PC-9 (cell line): ENCODE measurements at regions of chr6 and their contacts with region 1.

Region 1: DNA sequence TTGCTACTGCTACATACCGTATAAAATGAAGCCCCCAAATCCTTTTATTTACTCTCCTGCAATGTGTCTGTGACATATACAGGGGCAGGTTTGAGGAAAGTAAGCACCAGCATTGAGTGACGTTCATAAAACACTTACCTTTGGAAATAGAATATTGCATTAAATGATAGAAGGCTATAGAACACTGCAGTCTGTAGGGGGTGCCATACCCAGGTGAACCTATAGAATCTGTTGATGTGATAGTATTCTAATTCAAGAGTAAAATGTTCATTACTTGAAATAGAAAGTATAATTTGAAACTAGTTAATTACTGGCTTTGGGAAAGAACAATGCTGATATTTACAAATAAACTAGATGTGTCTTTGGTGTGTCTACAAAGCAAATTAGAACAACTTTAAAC is 47.0 kb upstream of the PRL start:
- DNase-seq: no peak
- H3K4me3 ChIP-seq: no peak overlapping the region
- H3K27ac ChIP-seq: no peak overlapping the region
- H3K4me1 ChIP-seq: no peaks in the 10 kb centered on the region
- H3K27me3 ChIP-seq: no peaks in the 10 kb centered on the region
- CTCF ChIP-seq: peak; percentile 38; the same call in 1 of the 2 replicates

Region 2: DNA sequence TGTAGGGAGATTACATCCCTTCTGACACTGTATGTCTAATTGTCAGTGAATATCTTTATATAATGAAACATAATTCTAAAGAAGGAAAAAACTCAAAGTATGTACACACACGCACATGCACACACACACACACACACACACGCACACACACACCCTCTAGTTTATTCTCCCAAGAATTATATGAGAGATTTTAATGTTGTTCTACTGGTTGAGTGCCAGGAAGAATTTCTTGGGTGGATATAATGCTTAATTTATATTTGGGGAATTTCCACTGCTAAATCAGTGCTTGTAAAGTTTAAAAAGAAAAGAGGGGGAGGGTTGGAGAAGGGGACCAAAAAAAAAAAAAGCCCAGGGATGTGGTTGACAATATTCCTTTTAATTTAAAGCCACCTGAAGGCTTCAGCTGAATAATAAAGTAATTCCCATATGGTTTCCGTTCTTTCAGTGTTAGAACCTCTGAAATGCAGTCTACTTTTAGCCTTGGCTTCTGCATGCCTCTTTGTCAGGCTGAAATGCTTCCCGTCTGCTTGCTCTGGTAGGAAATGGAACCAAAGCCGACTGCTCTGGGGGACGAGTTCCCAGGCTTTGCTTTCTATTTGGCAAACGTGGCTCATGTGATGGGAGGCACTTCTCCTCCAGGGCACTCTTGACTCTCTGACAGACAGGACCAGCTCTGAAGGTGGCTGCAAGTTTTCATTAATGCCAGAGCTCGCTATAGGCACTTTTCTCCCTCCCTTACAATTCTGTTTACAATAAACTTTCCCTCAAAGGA is 272.4 kb before region 1 on chr6:
- CTCF ChIA-PET with region 1: interaction called, 14 read pairs
- POLR2A ChIA-PET with region 1: no interaction called
- intact Hi-C with region 1: no loop called
- DNase-seq: no peak
- H3K4me3 ChIP-seq: no peak overlapping the region
- H3K27ac ChIP-seq: no peak overlapping the region
- H3K4me1 ChIP-seq: no peaks in the 10 kb centered on the region
- H3K27me3 ChIP-seq: no peaks in the 10 kb centered on the region
- CTCF ChIP-seq: no peak

Region 3: GRCh38 chr6:22254886-22255285 is 89.0 kb before region 1 on chr6:
- CTCF ChIA-PET with region 1: no interaction called
- POLR2A ChIA-PET with region 1: no interaction called
- intact Hi-C with region 1: no loop called
- DNase-seq: no peak
- H3K4me3 ChIP-seq: no peak overlapping the region
- H3K27ac ChIP-seq: no peak overlapping the region
- H3K4me1 ChIP-seq: peaks cover 18% of the 10 kb centered on the region
- H3K27me3 ChIP-seq: no peaks in the 10 kb centered on the region
- CTCF ChIP-seq: no peak